PC-9 (cell line): ENCODE measurements at regions of chr3 and their contacts with region 1.

Region 1: GRCh38 chr3:188339410-188340295 is 185.7 kb downstream of the LPP start:
- DNase-seq: no peak
- H3K4me3 ChIP-seq: no peak overlapping the region
- H3K27ac ChIP-seq: no peak overlapping the region
- H3K4me1 ChIP-seq: no peaks in the 10 kb centered on the region
- H3K27me3 ChIP-seq: no peaks in the 10 kb centered on the region
- CTCF ChIP-seq: no peak

Region 2: GRCh38 chr3:188362405-188362831 is 22.8 kb after region 1 on chr3:
- CTCF ChIA-PET with region 1: interaction called, 12 read pairs
- POLR2A ChIA-PET with region 1: no interaction called
- intact Hi-C with region 1: no loop called
- DNase-seq: peak; percentile 41 to 87
- H3K4me3 ChIP-seq: no peak overlapping the region
- H3K27ac ChIP-seq: peak overlapping the region; percentile 17; the same call in 1 of the 2 replicates
- H3K4me1 ChIP-seq: peaks cover 9% of the 10 kb centered on the region
- H3K27me3 ChIP-seq: no peaks in the 10 kb centered on the region
- CTCF ChIP-seq: 0 out of 2 replicates have a peak, but pooled peaks have one; percentile 38